ENCODE measurements at regions of chr1 and their contacts with region 1.

Region 1: GRCh38 chr1:204565617-204566582 is 49.7 kb downstream of the MDM4 start:
- DNase-seq: peak; percentile 80
- ATAC-seq: peak; percentile 86
- H3K4me3 Mint-ChIP-seq: no peak overlapping the region
- H3K27ac Mint-ChIP-seq: peak overlapping the region; percentile 77
- H3K4me1 Mint-ChIP-seq: peaks cover 45% of the 10 kb centered on the region
- H3K27me3 Mint-ChIP-seq: no peaks in the 10 kb centered on the region
- CTCF ChIP-seq: peak; percentile 66

Region 2: GRCh38 chr1:204418174-204419063 is 147.5 kb before region 1 on chr1:
- CTCF ChIA-PET with region 1: no interaction called
- POLR2A ChIA-PET with region 1: no interaction called
- intact Hi-C with region 1: no loop called
- DNase-seq: peak; percentile 32
- ATAC-seq: peak; percentile 55
- H3K4me3 Mint-ChIP-seq: no peak overlapping the region
- H3K27ac Mint-ChIP-seq: no peak overlapping the region
- H3K4me1 Mint-ChIP-seq: peaks cover 38% of the 10 kb centered on the region
- H3K27me3 Mint-ChIP-seq: no peaks in the 10 kb centered on the region
- CTCF ChIP-seq: no peak

Region 3: GRCh38 chr1:204532832-204533231 is 33.1 kb before region 1 on chr1:
- CTCF ChIA-PET with region 1: no interaction called
- POLR2A ChIA-PET with region 1: no interaction called
- intact Hi-C with region 1: no loop called
- DNase-seq: no peak
- ATAC-seq: no peak
- H3K4me3 Mint-ChIP-seq: no peak overlapping the region
- H3K27ac Mint-ChIP-seq: peak overlapping the region; percentile 12
- H3K4me1 Mint-ChIP-seq: peaks cover 15% of the 10 kb centered on the region
- H3K27me3 Mint-ChIP-seq: no peaks in the 10 kb centered on the region
- CTCF ChIP-seq: no peak

Region 4: DNA sequence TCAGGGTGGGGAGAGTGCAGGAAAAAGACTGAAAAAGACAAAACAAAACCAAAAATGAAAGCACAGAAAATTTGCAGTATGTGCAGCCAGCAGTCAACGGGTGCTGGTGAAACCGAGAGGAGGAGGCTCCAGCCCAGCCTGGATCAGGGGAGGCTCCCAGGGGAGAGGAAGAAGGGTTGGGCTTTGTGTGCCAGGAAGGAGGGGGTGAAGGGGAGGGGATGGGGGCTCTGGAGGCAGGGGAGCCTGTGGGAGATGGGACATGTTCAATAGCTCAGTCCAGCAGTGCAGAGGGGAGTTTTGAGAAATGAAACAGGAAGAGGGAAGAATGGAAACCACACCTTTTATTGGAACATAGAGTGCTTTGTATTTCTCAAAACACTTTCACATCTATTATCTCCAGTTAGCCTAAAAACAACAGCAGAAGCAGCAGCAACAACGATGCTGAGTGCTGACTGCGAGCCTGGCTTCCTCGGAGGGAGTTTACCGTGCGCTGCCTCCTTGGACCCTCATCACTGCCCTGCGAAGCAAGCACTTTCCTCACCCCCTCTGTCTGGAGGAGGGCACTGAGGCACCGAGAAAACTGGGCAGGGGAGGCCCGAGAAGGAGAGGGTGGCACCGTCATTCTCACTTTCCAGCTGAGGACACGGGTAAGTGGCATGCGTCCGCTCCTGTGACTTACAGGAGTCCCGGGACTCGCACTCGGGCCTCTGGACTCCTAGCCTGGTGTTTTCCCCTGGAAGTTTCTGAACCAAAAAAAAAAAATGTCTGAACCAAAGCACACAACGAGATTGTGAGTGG is 13.2 kb after region 1 on chr1:
- CTCF ChIA-PET with region 1: interaction called, 26 read pairs
- POLR2A ChIA-PET with region 1: no interaction called
- intact Hi-C with region 1: no loop called
- DNase-seq: peak; percentile 49
- ATAC-seq: peak; percentile 82
- H3K4me3 Mint-ChIP-seq: peak overlapping the region; percentile 62
- H3K27ac Mint-ChIP-seq: peak overlapping the region; percentile 88
- H3K4me1 Mint-ChIP-seq: peaks cover 24% of the 10 kb centered on the region
- H3K27me3 Mint-ChIP-seq: no peaks in the 10 kb centered on the region
- CTCF ChIP-seq: no peak

Region 5: GRCh38 chr1:204623894-204624361 is 58.0 kb after region 1 on chr1:
- CTCF ChIA-PET with region 1: interaction called, 18 read pairs
- POLR2A ChIA-PET with region 1: no interaction called
- intact Hi-C with region 1: no loop called
- DNase-seq: peak; percentile 32
- ATAC-seq: peak; percentile 69
- H3K4me3 Mint-ChIP-seq: no peak overlapping the region
- H3K27ac Mint-ChIP-seq: no peak overlapping the region
- H3K4me1 Mint-ChIP-seq: no peaks in the 10 kb centered on the region
- H3K27me3 Mint-ChIP-seq: no peaks in the 10 kb centered on the region
- CTCF ChIP-seq: no peak

Region 6: DNA sequence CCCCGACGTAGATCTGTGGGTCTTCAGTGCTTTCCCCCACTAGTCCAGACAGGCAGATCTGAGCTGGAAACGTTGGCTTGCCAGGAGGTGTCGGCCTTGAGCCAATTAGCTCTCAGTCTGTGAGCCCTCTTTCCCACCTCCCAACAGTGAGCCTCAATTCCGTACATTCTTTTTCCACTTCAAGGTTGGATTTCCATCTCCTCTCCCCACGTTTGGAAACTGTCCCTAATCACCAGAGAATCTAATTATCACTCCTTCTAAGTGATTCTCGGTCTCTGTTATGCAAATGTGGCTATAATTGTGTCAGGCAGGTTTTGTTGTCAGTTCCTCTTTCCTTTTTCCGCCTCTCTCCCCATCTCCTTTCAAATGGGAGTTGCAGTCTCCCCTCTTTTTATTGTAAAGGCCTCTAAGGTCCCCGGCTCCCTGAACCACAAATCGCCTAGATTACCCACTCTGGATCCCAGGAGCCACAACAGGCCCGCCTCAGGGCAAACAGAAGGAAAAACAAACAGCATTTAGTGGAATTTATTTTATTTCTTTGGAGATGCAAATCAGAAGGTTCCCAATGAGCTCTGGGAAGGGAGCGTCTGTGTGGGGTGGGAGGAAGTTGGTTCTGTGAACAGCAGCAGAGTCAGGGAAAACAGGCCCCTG is 149.1 kb after region 1 on chr1:
- CTCF ChIA-PET with region 1: no interaction called
- POLR2A ChIA-PET with region 1: no interaction called
- intact Hi-C with region 1: no loop called
- DNase-seq: no peak
- ATAC-seq: no peak
- H3K4me3 Mint-ChIP-seq: no peak overlapping the region
- H3K27ac Mint-ChIP-seq: no peak overlapping the region
- H3K4me1 Mint-ChIP-seq: peaks cover 5% of the 10 kb centered on the region
- H3K27me3 Mint-ChIP-seq: peaks cover 11% of the 10 kb centered on the region
- CTCF ChIP-seq: no peak

Region 7: DNA sequence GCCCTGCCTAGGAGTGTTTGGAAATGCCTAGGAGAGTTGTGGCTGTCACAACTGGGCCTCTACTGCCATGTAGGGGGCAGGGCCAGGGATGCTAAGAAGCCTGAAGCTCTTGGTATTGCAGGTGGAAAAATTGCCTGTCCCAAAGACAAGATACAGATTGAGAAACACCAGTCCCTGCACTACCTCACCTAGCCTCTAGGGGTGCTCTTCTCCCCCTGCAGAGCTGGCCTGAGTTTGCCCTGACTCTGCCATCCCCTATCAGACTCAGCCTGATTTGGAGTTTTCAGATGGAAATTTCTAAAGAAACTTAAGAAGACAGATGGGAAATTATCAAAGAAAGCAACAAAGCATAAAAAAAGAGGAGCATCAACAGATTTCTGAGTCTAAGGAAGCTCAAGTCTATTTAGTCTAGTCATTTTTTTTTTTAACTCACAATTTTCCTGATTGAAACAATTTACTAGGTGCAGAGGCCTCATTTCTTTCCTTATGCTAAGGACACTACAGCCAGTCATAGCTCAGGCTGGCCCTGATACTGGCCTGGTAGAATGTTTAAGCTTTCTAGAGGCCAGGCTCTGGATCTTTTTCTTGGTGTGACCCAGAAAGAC is 181.0 kb after region 1 on chr1:
- CTCF ChIA-PET with region 1: interaction called, 10 read pairs
- POLR2A ChIA-PET with region 1: no interaction called
- intact Hi-C with region 1: no loop called
- DNase-seq: peak; percentile 68
- ATAC-seq: peak; percentile 99
- H3K4me3 Mint-ChIP-seq: no peak overlapping the region
- H3K27ac Mint-ChIP-seq: no peak overlapping the region
- H3K4me1 Mint-ChIP-seq: no peaks in the 10 kb centered on the region
- H3K27me3 Mint-ChIP-seq: peaks cover 6% of the 10 kb centered on the region
- CTCF ChIP-seq: peak; percentile 91

Measured in activated CD8-positive, alpha-beta T cell treated with anti-CD3 and anti-CD28 coated beads for 36 hours (primary cell).